ENCODE measurements at regions of chr12 and their contacts with region 1.

Region 1: GRCh38 chr12:29552324-29552927 is 54.9 kb upstream of the OVCH1 start:
- DNase-seq: peak; percentile 22
- ATAC-seq: peak; percentile 93
- H3K4me3 ChIP-seq: no peak overlapping the region
- H3K27ac ChIP-seq: no peak overlapping the region
- H3K4me1 ChIP-seq: no peaks in the 10 kb centered on the region
- H3K27me3 ChIP-seq: no peaks in the 10 kb centered on the region
- CTCF ChIP-seq: peak; percentile 47 to 92 (median 81); a peak in 5 of 6 replicates
- POLR2A ChIP-seq: no peak
- RAD21 ChIP-seq: peak; percentile 79

Region 2: DNA sequence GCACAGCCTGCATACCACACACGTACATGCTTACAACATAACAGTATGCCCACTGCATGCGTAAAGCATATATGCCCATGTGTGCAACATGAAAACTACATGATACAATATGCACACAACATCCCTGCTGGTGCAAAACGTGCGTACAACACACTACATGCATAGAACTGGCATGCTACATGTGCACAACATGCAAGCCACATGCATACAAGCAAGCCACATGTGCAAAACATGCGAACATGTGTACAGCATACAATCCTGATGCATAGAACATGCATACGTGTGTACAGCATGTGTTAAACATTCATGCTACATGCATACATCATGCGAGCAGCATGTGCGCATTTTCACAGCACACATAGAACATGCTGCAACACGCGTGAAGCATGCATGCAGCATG is 239.7 kb after region 1 on chr12:
- CTCF ChIA-PET with region 1: no interaction called
- POLR2A ChIA-PET with region 1: no interaction called
- RAD21 ChIA-PET with region 1: no interaction called
- intact Hi-C with region 1: no loop called
- DNase-seq: no peak
- ATAC-seq: no peak
- H3K4me3 ChIP-seq: no peak overlapping the region
- H3K27ac ChIP-seq: no peak overlapping the region
- H3K4me1 ChIP-seq: peaks cover 0 to 6% of the 10 kb centered on the region in 2 experiments; a peak in 2 of 4 replicates
- H3K27me3 ChIP-seq: no peaks in the 10 kb centered on the region
- CTCF ChIP-seq: no peak
- POLR2A ChIP-seq: no peak
- RAD21 ChIP-seq: no peak

Region 3: GRCh38 chr12:29844667-29845066 is 292.2 kb after region 1 on chr12:
- CTCF ChIA-PET with region 1: no interaction called
- POLR2A ChIA-PET with region 1: no interaction called
- RAD21 ChIA-PET with region 1: no interaction called
- intact Hi-C with region 1: no loop called
- DNase-seq: no peak
- ATAC-seq: no peak
- H3K4me3 ChIP-seq: no peak overlapping the region
- H3K27ac ChIP-seq: no peak overlapping the region
- H3K4me1 ChIP-seq: no peaks in the 10 kb centered on the region
- H3K27me3 ChIP-seq: no peaks in the 10 kb centered on the region
- CTCF ChIP-seq: no peak
- POLR2A ChIP-seq: no peak
- RAD21 ChIP-seq: peak; percentile 11; the same call in 1 of the 2 replicates

Region 4: DNA sequence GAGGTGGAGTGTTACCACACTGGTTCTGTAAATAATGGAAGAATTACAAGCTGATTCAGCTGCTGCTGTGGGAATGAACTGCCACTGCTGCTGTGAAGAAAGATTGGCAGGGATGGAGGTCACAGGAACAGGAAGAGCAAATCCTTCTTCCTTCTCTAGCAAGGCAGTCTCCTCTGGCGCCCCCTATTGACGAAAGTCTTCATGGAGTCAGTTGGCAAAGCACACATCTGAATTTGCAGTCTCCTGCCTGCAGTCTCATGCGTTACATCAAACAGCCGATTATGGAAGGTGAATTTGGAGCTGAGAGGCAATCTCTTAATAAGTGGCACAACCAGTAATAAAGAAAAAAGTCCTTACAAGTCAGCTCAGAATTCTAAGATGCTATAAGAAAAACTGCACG is 337.3 kb after region 1 on chr12:
- CTCF ChIA-PET with region 1: interaction called, 5 read pairs
- POLR2A ChIA-PET with region 1: no interaction called
- RAD21 ChIA-PET with region 1: no interaction called
- intact Hi-C with region 1: loop called (anchors 1 kb)
- DNase-seq: peak; percentile 52
- ATAC-seq: peak; percentile 57; the same call in 1 of the 2 replicates
- H3K4me3 ChIP-seq: no peak overlapping the region
- H3K27ac ChIP-seq: no peak overlapping the region
- H3K4me1 ChIP-seq: no peaks in the 10 kb centered on the region
- H3K27me3 ChIP-seq: no peaks in the 10 kb centered on the region
- CTCF ChIP-seq: peak; percentile 37 to 80 (median 77); a peak in 5 of 6 replicates
- POLR2A ChIP-seq: no peak
- RAD21 ChIP-seq: peak; percentile 55

Region 5: GRCh38 chr12:30134229-30134628 is 581.8 kb after region 1 on chr12:
- CTCF ChIA-PET with region 1: no interaction called
- POLR2A ChIA-PET with region 1: no interaction called
- RAD21 ChIA-PET with region 1: no interaction called
- intact Hi-C with region 1: loop called (anchors 2 kb)
- DNase-seq: peak; percentile 3
- ATAC-seq: peak; percentile 69
- H3K4me3 ChIP-seq: no peak overlapping the region
- H3K27ac ChIP-seq: no peak overlapping the region
- H3K4me1 ChIP-seq: no peaks in the 10 kb centered on the region
- H3K27me3 ChIP-seq: no peaks in the 10 kb centered on the region
- CTCF ChIP-seq: peak in 2 of 3 experiments; percentile 27 to 44; a peak in 3 of 6 replicates
- POLR2A ChIP-seq: no peak
- RAD21 ChIP-seq: peak; percentile 40

Region 6: GRCh38 chr12:30286345-30286926 is 734.0 kb after region 1 on chr12:
- CTCF ChIA-PET with region 1: no interaction called
- POLR2A ChIA-PET with region 1: no interaction called
- RAD21 ChIA-PET with region 1: no interaction called
- intact Hi-C with region 1: loop called (anchors 1 kb)
- DNase-seq: peak; percentile 22
- ATAC-seq: no peak; the same call in 1 of the 2 replicates
- H3K4me3 ChIP-seq: no peak overlapping the region
- H3K27ac ChIP-seq: no peak overlapping the region
- H3K4me1 ChIP-seq: no peaks in the 10 kb centered on the region
- H3K27me3 ChIP-seq: no peaks in the 10 kb centered on the region
- CTCF ChIP-seq: peak; percentile 34 to 66 (median 49); a peak in 5 of 6 replicates
- POLR2A ChIP-seq: no peak
- RAD21 ChIP-seq: peak; percentile 64